ENCODE measurements at regions of chr9 and their contacts with region 1.

Region 1: DNA sequence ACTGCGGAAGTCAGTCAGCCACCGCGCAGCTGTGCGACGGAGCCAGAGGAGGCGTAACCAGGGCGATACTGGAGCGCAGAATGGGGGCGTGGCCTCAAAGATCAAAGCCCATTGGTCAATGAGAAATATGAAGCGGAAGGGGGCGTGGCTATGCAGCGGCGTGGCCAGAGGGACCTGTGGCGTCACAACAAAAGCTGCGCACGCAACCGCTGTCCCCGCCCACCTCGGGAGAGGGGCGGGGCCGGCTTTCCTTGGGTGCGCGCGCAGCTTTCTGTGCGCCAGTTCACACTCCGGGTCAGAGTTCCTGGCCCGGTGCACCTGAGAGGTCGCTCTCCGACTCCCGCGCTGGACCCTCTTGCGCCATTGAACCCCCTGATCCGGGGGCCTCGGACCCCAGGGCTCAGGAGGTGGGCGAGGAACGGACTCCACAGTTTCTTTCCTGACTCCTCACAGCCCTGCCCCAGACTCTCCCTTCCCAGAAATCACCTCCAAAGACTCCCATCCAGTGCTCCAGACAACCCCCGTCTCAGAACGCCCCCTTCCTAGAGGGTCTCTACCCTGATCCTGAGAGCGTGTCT is at the starts of genes GOLGA2 and SWI5:
- DNase-seq: peak; percentile 95 to 100
- H3K4me3 ChIP-seq: peak within 1 kb of the TSS; percentile 65
- H3K27ac ChIP-seq: peak within 1 kb of the TSS; percentile 51; the same call in 1 of the 2 replicates
- H3K4me1 ChIP-seq: peaks cover 36% of the 10 kb centered on the region
- H3K27me3 ChIP-seq: no peaks in the 10 kb centered on the region
- CTCF ChIP-seq: no peak
- total RNA-seq, gene GOLGA2: 175 and 188 TPM in 2 replicates
- total RNA-seq, gene SWI5: 70.4 and 86.0 TPM in 2 replicates

Region 2: GRCh38 chr9:127336738-127337251 is 939.3 kb before region 1 on chr9:
- CTCF ChIA-PET with region 1: no interaction called
- POLR2A ChIA-PET with region 1: no interaction called
- intact Hi-C with region 1: no loop called
- DNase-seq: peak; percentile 76 to 95
- H3K4me3 ChIP-seq: peak overlapping the region; percentile 5; the same call in 1 of the 2 replicates
- H3K27ac ChIP-seq: peak overlapping the region; percentile 57
- H3K4me1 ChIP-seq: peaks cover 47% of the 10 kb centered on the region
- H3K27me3 ChIP-seq: no peaks in the 10 kb centered on the region
- CTCF ChIP-seq: no peak

Region 3: DNA sequence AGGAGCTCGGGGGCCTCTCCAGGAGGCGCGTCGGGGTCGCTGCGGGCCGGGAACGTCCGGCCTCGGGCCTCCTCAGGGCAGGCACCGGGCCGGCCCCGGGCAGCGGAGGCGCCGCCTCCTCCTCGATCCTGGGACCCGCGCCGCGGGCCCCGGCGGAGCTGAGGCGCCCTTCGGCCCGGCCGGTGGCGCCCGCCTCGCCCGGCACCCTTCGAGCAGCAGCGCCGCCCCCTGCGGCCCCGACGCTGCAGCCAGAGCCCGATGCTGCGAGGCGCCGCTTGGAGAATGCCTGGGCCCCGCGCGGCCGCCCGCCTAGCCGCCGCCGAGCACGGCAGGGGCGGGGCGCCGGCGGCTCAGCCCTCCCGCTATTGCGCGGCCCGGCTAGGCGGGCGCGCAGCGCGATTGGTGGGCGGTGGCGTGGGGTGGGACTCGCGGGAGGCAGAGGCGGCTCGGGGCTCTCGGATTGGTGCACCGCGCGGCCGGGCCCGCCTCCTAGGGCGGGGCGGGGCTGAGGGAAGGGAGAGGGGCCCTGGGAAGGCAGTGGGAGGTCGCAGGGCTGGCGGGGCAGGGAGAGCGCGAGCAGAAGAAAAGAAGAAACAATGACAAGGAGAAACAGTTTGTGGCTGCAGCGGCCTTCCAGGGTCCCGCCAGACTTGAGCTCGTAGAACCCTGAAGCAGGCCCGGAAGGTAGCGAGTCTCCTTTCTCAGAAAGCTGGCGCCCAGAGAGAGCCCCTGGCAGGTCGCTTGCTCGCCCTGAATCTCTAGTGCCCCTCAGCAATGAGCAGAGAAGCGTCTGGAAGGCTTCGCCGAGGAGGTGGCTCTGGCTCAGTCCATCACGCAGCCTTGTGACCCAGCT is 295.2 kb before region 1 on chr9 and contains the start of gene EEIG1:
- CTCF ChIA-PET with region 1: no interaction called
- POLR2A ChIA-PET with region 1: no interaction called
- intact Hi-C with region 1: no loop called
- DNase-seq: peak; percentile 73 to 99
- H3K4me3 ChIP-seq: peak within 1 kb of the TSS; percentile 82
- H3K27ac ChIP-seq: peak within 1 kb of the TSS; percentile 39
- H3K4me1 ChIP-seq: peaks cover 45% of the 10 kb centered on the region
- H3K27me3 ChIP-seq: no peaks in the 10 kb centered on the region
- CTCF ChIP-seq: no peak
- total RNA-seq, gene EEIG1: 176 and 208 TPM in 2 replicates

Region 4: GRCh38 chr9:128304149-128304974 is 28.3 kb after region 1 on chr9:
- CTCF ChIA-PET with region 1: interaction called, 5 read pairs
- POLR2A ChIA-PET with region 1: interaction called, 11 read pairs
- intact Hi-C with region 1: no loop called
- DNase-seq: peak; percentile 6 to 56
- H3K4me3 ChIP-seq: no peak overlapping the region
- H3K27ac ChIP-seq: peak overlapping the region; percentile 97
- H3K4me1 ChIP-seq: peaks cover 65% of the 10 kb centered on the region
- H3K27me3 ChIP-seq: no peaks in the 10 kb centered on the region
- CTCF ChIP-seq: no peak

Region 5: GRCh38 chr9:128333451-128333869 is 57.4 kb after region 1 on chr9:
- CTCF ChIA-PET with region 1: no interaction called
- POLR2A ChIA-PET with region 1: no interaction called
- intact Hi-C with region 1: no loop called
- DNase-seq: no peak
- H3K4me3 ChIP-seq: no peak overlapping the region
- H3K27ac ChIP-seq: no peak overlapping the region
- H3K4me1 ChIP-seq: peaks cover 9% of the 10 kb centered on the region
- H3K27me3 ChIP-seq: no peaks in the 10 kb centered on the region
- CTCF ChIP-seq: no peak

Region 6: GRCh38 chr9:128484686-128485413 is 208.8 kb after region 1 on chr9:
- CTCF ChIA-PET with region 1: no interaction called
- POLR2A ChIA-PET with region 1: no interaction called
- intact Hi-C with region 1: no loop called
- DNase-seq: no peak
- H3K4me3 ChIP-seq: no peak overlapping the region
- H3K27ac ChIP-seq: no peak overlapping the region
- H3K4me1 ChIP-seq: no peaks in the 10 kb centered on the region
- H3K27me3 ChIP-seq: no peaks in the 10 kb centered on the region
- CTCF ChIP-seq: no peak

Measured in PC-9 (cell line).